Heart right ventricle (tissue), 16 donors: ENCODE measurements at regions of chr16 and their contacts with region 1.

Region 1: DNA sequence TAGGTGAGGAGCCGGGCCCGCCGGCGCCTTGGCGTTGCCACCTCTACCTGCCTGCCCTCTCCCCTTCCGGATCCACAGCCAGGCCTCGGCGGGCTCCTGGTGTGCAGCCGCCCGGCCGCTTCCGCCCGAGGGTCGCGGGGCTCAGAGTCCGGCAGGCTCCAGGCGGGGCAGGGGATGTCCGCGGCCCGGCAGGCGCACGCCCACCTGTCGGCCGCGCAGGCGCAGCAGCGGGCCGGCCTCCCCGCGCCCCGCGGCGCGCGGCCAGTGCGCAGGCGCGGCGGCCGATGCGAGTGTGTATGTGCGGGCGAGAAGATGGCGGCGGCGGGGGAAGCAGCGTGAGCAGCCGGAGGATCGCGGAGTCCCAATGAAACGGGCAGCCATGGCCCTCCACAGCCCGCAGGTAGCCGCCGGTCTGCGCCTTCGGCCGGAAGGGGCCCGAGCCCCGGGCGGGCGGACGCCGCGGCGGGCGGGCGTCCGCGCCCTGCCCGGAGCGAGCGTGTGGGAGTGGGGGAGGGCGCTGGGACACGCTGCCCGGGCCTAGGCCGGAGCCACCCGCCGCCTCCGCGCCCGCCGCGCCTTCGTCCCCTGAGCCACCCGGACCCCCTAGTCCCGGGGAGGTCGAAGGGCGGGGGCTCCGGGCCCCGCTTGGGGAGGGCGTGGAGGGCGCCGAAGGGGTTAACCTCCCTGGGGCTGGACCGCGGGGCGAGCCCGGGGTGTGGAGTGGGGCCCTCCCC is at the start of gene USP10:
- DNase-seq: peak; percentile 71 to 83
- ATAC-seq: peak; percentile 80 to 95 (median 88)
- H3K4me3 ChIP-seq: peak within 1 kb of the TSS; percentile 78 to 100 (median 98)
- H3K27ac ChIP-seq: peak within 1 kb of the TSS; percentile 75 to 94 (median 90)
- H3K4me1 ChIP-seq: peaks cover 4 to 47% (median 39%) of the 10 kb centered on the region in 9 donors
- H3K27me3 ChIP-seq: no peaks in the 10 kb centered on the region
- CTCF ChIP-seq: no peak
- total RNA-seq, gene USP10: 59.5 to 82.9 (median 65.4) TPM

Region 2: DNA sequence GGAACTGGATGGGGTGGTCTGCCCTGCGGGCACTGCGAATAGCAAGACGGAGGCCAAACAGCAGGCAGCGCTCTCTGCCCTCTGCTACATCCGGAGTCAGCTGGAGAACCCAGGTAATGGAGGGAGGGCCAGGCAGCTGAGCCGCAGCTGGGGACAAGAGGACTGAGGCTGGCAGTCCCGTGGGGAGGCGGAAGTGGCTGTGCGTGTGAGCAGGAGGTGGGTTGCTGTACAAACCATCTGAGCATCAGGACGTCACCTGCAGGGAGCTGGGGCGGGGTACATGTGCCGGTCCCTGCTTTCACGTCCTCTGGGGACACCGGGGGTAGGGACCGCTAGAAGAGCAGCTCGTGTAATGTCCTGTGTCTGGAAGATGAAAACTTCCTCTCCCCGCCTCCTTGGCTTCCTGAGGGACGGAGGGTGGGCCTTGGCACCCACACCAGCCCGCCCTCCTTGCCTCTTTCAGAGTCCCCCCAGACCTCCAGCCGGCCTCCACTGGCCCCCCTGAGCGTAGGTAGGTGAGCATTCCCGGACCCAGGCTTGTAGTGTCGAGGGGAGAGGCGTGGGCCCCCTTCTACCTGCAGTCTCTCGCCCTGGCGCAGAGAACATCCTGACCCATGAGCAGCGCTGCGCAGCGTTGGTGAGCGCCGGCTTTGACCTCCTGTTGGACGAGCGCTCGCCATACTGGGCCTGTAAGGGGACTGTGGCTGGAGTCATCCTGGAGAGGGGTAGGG is 505.2 kb before region 1 on chr16:
- intact Hi-C with region 1: no loop called
- DNase-seq: no peak
- ATAC-seq: peak in 2 of 8 donors; percentile 8 to 23
- H3K4me3 ChIP-seq: peak overlapping the region in 1 of 10 donors; percentile 1
- H3K27ac ChIP-seq: no peak overlapping the region
- H3K4me1 ChIP-seq: peaks cover 0 to 18% (median 0%) of the 10 kb centered on the region in 9 donors
- H3K27me3 ChIP-seq: peaks cover 0 to 33% (median 0%) of the 10 kb centered on the region in 7 donors
- CTCF ChIP-seq: no peak

Region 3: GRCh38 chr16:84593825-84594724 is 105.8 kb before region 1 on chr16:
- intact Hi-C with region 1: no loop called
- DNase-seq: no peak
- ATAC-seq: peak in 7 of 8 donors; percentile 31 to 55 (median 36)
- H3K4me3 ChIP-seq: peak overlapping the region in 1 of 10 donors; percentile 45
- H3K27ac ChIP-seq: peak overlapping the region in 2 of 10 donors; percentile 58 to 93
- H3K4me1 ChIP-seq: peaks cover 0 to 53% (median 2%) of the 10 kb centered on the region in 9 donors
- H3K27me3 ChIP-seq: peaks cover 0 to 4% (median 0%) of the 10 kb centered on the region in 7 donors
- CTCF ChIP-seq: no peak

Region 4: DNA sequence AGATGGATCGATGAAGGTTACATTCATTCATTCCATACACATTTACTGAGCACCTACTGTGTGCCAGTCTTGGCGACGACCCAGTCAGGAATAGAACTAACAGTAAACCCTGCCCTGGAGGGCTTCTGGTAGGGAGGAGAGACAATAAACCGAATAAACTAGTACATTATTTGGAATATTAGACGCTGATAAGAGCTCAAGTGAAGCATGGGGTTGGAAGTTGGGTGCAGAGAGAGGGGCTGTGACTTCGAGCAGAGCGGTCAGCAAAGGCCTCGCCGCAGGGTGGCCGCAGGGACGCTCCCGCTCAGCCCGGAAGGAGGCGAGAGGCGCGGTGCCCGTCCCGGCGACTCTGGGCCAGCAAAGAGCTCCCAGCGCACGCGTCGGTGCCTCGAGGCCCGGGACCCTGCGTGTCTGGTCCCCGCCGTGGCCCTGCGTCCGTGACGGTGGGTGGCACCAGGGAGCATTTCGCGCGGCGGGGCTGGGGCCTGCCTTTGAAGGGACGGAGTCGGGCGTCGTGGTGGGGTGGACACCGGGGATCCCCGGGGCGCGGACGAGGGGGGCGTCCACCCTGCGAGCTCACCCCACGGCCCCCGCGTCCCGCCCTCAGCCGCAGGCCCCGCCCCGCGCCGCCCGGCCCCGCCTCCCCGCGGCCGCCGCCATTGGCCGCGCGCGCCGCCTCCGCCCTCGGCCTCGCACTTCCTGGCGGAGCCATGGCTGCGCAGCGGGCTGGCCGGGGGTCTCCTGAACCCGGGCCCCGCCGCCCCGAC is 51.9 kb before region 1 on chr16 and contains the start of gene KLHL36:
- intact Hi-C with region 1: loop called in 1 of 10 experiments (anchors 5 kb)
- DNase-seq: peak; percentile 51 to 77
- ATAC-seq: peak; percentile 51 to 89 (median 68)
- H3K4me3 ChIP-seq: peak within 1 kb of the TSS; percentile 55 to 100 (median 81)
- H3K27ac ChIP-seq: peak within 1 kb of the TSS; percentile 88 to 97 (median 92)
- H3K4me1 ChIP-seq: peaks cover 2 to 40% (median 31%) of the 10 kb centered on the region in 9 donors
- H3K27me3 ChIP-seq: no peaks in the 10 kb centered on the region
- CTCF ChIP-seq: peak in 2 of 9 donors; percentile 8 to 22
- total RNA-seq, gene KLHL36: 40.0 to 77.9 (median 58.4) TPM

Region 5: DNA sequence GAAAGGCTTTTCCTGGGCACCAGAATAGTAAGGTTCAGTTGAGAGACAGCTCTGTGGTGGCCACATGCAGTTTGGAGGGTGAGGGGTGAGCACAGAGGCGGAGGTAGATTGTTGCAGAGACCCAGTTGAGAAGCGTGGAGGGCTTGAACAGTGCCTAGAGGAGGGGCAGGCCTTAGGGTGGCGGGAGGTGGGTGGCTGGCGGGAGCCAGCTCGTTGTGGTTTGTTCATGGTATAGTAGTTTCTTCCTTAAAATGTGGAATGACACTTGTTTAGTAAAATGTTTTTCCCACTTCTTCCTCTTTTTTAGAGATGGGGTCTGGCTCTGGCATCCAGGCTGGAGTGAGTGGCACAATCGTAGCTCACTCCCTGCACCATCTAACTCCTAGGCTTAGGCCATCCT is 14.1 kb after region 1 on chr16:
- intact Hi-C with region 1: loop called in 1 of 10 experiments (anchors 1 kb)
- DNase-seq: no peak
- ATAC-seq: peak in 3 of 8 donors; percentile 11 to 55 (median 39)
- H3K4me3 ChIP-seq: no peak overlapping the region
- H3K27ac ChIP-seq: no peak overlapping the region
- H3K4me1 ChIP-seq: peaks cover 5 to 65% (median 43%) of the 10 kb centered on the region in 9 donors
- H3K27me3 ChIP-seq: no peaks in the 10 kb centered on the region
- CTCF ChIP-seq: no peak